Ascending aorta (tissue), 2 donors: ENCODE measurements at regions of chr12 and their contacts with region 1.

Region 1: GRCh38 chr12:22334410-22335290 is at the start of gene ST8SIA1:
- DNase-seq: peak in 1 of 2 donors; percentile 63
- H3K4me3 ChIP-seq: peak within 1 kb of the TSS; percentile 59 to 73
- H3K27ac ChIP-seq: peak within 1 kb of the TSS; percentile 2 to 9
- H3K4me1 ChIP-seq: no peaks in the 10 kb centered on the region
- H3K27me3 ChIP-seq: no peaks in the 10 kb centered on the region
- CTCF ChIP-seq: no peak
- total RNA-seq, gene ST8SIA1: 9.7 TPM

Region 2: DNA sequence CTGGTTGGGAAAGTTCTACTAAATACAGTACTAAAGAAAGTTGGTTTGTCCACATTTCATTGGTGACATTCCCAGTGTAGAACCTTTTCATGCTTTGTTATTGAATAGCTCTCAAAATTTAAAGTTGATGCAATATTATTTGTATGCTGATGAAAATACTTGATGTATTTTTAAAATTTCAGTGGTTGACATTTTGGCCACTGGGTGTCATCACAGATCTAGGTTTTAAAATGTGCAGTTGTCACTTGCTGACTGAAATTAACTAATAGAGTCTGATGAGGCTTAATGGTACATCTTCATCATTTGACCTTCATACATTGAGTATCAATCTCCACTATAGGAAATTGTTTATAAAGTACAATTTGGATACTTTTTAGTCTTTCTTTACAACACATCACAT is 251.5 kb before region 1 on chr12:
- intact Hi-C with region 1: loop called (anchors 1 kb)
- DNase-seq: no peak
- H3K4me3 ChIP-seq: no peak overlapping the region
- H3K27ac ChIP-seq: no peak overlapping the region
- H3K4me1 ChIP-seq: no peaks in the 10 kb centered on the region
- H3K27me3 ChIP-seq: no peaks in the 10 kb centered on the region
- CTCF ChIP-seq: peak in 2 of 3 experiments; percentile 50 to 52

Region 3: GRCh38 chr12:22100958-22101748 is 233.5 kb before region 1 on chr12:
- intact Hi-C with region 1: loop called (anchors 1 kb)
- DNase-seq: no peak
- H3K4me3 ChIP-seq: no peak overlapping the region
- H3K27ac ChIP-seq: no peak overlapping the region
- H3K4me1 ChIP-seq: no peaks in the 10 kb centered on the region
- H3K27me3 ChIP-seq: no peaks in the 10 kb centered on the region
- CTCF ChIP-seq: peak; percentile 16 to 50 (median 36)

Region 4: GRCh38 chr12:22231836-22232235 is 102.8 kb before region 1 on chr12:
- intact Hi-C with region 1: loop called (anchors 5 kb)
- DNase-seq: no peak
- H3K4me3 ChIP-seq: no peak overlapping the region
- H3K27ac ChIP-seq: no peak overlapping the region
- H3K4me1 ChIP-seq: peaks cover 0 to 2% of the 10 kb centered on the region in 2 donors
- H3K27me3 ChIP-seq: no peaks in the 10 kb centered on the region
- CTCF ChIP-seq: peak in 1 of 3 experiments; percentile 7

Region 5: DNA sequence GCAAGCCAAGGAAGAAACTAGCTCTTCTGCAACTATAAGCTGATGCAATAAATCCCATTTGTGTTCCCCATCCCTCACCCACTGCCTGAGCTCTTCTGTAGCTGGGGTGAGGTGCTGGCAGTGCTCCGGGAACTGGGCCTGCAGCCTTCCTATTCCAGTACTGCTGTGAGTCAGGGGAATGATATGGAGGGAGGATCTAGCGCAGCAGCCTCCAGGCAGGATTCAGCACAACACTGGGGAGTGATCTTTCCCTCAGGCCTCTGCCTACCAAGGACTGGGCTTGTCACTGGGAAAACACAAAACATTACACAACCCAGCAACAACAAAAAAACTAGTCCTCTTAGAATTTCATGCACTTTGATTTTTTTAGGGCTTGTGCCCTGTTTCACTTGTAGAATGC is 58.8 kb before region 1 on chr12:
- intact Hi-C with region 1: loop called (anchors 5 kb)
- DNase-seq: peak; percentile 66 to 97
- H3K4me3 ChIP-seq: no peak overlapping the region
- H3K27ac ChIP-seq: peak overlapping the region; percentile 56 to 86
- H3K4me1 ChIP-seq: peaks cover 0 to 30% of the 10 kb centered on the region in 2 donors
- H3K27me3 ChIP-seq: no peaks in the 10 kb centered on the region
- CTCF ChIP-seq: no peak

Region 6: DNA sequence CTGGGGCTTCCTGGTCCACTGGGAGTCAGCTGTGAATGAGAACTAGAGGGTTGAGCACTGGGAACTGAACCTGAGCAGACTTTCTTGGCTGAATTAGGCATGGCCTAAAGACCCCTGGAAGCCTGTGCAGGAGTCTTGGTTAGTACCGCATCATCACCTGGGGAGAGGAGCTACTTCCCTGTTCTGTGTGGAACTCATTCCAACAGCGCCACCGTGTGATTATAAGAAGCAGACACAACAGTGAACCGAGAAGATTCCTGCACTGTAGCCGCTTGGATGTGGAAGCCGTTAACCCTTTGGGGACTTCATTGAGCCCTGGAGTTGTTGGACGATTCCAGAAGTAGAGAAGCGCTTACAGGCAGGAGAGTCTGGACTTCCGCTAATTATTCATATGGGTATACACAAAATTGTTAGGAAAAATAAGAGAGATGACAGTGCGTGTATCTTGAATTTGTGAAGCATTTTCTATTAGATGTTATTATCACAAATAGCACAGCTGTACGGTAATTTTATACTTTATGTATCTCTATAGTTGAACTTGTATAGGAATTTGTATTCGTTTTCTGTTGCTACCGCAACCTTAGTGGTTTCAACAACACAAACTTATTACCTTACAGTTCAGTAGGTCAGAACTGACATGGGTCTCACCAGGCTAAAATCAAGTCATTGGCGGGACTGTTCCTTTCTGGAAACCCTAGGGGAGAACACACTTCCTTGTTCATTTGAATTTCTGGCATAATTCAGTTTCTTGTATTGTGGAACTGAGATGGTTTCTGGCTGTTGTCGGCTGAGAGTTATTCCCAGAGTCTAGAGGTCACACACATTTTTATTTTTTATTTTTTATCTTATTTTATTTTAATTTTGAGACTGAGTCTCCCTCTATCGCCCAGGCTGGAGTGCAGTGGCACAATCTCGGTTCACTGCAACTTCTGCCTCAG is 109.0 kb after region 1 on chr12:
- intact Hi-C with region 1: loop called (anchors 2 kb)
- DNase-seq: peak in 1 of 2 donors; percentile 73
- H3K4me3 ChIP-seq: no peak overlapping the region
- H3K27ac ChIP-seq: no peak overlapping the region
- H3K4me1 ChIP-seq: no peaks in the 10 kb centered on the region
- H3K27me3 ChIP-seq: no peaks in the 10 kb centered on the region
- CTCF ChIP-seq: peak; percentile 53 to 82 (median 75)